Dorsolateral prefrontal cortex (tissue), 120 donors: ENCODE measurements at regions of chr2 and their contacts with region 1.

Region 1: DNA sequence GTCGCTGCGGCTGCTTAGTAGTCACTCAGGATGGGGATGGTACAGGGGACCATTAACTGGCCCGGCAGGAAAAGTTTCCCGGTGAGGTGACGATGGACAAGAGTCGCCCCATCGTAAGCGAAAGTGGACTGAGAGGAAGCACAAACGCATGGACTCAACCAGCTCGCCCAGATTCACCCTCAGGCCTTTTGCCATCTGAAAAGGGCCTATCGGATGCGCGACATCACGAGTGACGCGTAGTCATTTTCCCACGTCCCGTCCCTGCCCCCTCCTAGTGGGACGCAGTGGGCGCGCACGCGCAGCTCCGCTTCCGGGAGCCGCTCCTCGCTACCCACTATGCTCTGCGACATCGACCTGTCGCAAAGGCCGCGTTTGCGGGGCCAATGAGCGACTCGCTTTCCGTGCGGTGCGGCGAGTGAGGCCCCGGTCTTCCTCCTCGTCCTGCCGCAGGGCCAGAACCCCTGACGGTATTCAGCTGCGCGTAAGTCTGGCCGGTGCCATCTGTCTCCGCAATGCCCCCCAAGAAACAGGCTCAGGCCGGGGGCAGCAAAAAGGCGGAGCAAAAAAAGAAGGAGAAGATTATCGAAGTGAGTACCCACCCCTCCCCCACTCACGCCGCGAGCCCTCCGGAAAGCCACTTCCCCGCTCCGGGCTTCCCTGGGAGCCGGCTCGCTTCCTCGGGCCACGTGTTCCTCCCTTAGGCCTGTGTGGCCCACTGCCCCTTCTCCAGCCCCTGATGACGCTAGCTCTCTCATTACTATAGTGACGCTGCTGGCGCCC is at the start of gene ZC3H15:
- DNase-seq: peak; percentile 92 to 98 (median 94)
- H3K4me3 ChIP-seq: peak within 1 kb of the TSS; percentile 60 to 100 (median 93)
- H3K27ac ChIP-seq: peak within 1 kb of the TSS; percentile 41 to 96 (median 91)
- H3K27me3 ChIP-seq: no peaks in the 10 kb centered on the region
- CTCF ChIP-seq: peak in 29 of 56 donors; percentile 7 to 53 (median 30)
- total RNA-seq, gene ZC3H15: 41.9 to 87.7 (median 64.8) TPM

Region 2: DNA sequence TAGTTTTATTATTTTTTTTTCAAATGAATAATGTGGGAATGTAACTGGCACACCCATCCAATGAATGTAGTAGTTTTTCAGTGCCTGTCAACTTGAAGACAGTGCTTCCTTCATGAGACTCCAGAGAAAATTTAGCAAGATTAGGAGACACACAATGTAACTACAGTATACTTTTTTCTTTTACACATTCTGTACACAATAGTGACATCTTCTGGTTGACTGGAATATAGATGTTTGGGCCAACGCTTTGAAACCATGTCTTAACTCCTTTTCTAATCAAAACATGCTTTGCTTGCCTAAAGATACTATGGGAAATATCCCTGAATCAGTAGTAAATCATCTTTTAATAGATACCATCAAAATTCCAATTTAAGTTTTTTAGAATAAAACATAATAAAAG is 229.5 kb before region 1 on chr2:
- intact Hi-C with region 1: no loop called
- DNase-seq: no peak
- H3K4me3 ChIP-seq: no peak overlapping the region
- H3K27ac ChIP-seq: no peak overlapping the region
- H3K27me3 ChIP-seq: no peaks in the 10 kb centered on the region
- CTCF ChIP-seq: peak in 55 of 56 donors; percentile 37 to 80 (median 62)

Region 3: DNA sequence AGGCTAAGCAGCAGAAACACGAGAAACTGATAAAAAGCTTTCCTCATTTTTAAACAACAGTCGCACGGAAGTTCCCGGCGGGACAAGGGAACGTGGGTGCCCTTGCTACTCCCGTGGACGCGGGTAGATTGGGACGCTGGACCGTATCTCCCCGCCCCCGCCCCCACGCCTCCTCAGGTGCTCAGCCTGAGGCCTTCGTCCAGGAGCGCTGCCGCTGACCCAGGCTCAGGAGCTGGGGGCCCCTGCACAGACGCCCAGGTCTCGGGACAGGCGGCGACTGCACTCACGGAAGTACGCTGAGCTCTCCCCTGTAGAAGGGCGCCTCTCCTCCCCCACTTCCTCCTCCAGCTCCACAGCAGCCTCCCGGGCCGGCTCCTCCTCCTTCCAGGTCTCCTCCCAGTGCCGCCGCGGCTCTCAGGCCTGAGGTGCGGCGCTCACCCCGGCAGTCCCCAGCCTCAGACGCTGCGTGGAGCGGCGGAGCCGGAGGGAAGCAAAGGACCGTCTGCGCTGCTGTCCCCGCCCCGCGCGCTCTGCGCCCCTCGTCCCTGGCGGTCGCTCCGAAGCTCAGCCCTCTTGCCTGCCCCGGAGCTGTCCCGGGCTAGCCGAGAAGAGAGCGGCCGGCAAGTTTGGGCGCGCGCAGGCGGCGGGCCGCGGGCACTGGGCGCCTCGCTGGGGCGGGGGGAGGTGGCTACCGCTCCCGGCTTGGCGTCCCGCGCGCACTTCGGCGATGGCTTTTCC is 103.7 kb after region 1 on chr2 and contains the start of gene ITGAV:
- intact Hi-C with region 1: loop called in 1 of 2 experiments (anchors 5 kb)
- DNase-seq: peak; percentile 52 to 89 (median 76)
- H3K4me3 ChIP-seq: peak within 1 kb of the TSS; percentile 52 to 94 (median 84)
- H3K27ac ChIP-seq: peak within 1 kb of the TSS; percentile 49 to 96 (median 90)
- H3K27me3 ChIP-seq: no peaks in the 10 kb centered on the region
- CTCF ChIP-seq: peak in 7 of 56 donors; percentile 4 to 29 (median 19)
- total RNA-seq, gene ITGAV: 50.3 to 160 (median 86.2) TPM